CD4-positive, alpha-beta T cell (primary cell): ENCODE measurements at regions of chr18 and their contacts with region 1.

Region 1: GRCh38 chr18:67199993-67200617 is 316.4 kb downstream of the DSEL start:
- DNase-seq: peak in 3 of 14 experiments; percentile 40 to 58 (median 50)
- ATAC-seq: peak; percentile 62
- H3K4me3 ChIP-seq: no peak overlapping the region
- H3K4me3 Mint-ChIP-seq: no peak overlapping the region
- H3K27ac ChIP-seq: no peak overlapping the region
- H3K27ac Mint-ChIP-seq: no peak overlapping the region
- H3K4me1 ChIP-seq: no peaks in the 10 kb centered on the region
- H3K4me1 Mint-ChIP-seq: no peaks in the 10 kb centered on the region
- H3K27me3 ChIP-seq: no peaks in the 10 kb centered on the region
- H3K27me3 Mint-ChIP-seq: peaks cover 13% of the 10 kb centered on the region
- CTCF ChIP-seq: peak; percentile 72

Region 2: GRCh38 chr18:66473882-66474281 is 726.2 kb before region 1 on chr18:
- CTCF ChIA-PET with region 1: no interaction called
- POLR2A ChIA-PET with region 1: no interaction called
- intact Hi-C with region 1: no loop called
- DNase-seq: no peak
- ATAC-seq: no peak
- H3K4me3 ChIP-seq: no peak overlapping the region
- H3K4me3 Mint-ChIP-seq: no peak overlapping the region
- H3K27ac ChIP-seq: no peak overlapping the region
- H3K27ac Mint-ChIP-seq: no peak overlapping the region
- H3K4me1 ChIP-seq: no peaks in the 10 kb centered on the region
- H3K4me1 Mint-ChIP-seq: no peaks in the 10 kb centered on the region
- H3K27me3 ChIP-seq: no peaks in the 10 kb centered on the region
- H3K27me3 Mint-ChIP-seq: no peaks in the 10 kb centered on the region
- CTCF ChIP-seq: no peak

Region 3: GRCh38 chr18:67104700-67105284 is 95.3 kb before region 1 on chr18:
- CTCF ChIA-PET with region 1: no interaction called
- POLR2A ChIA-PET with region 1: no interaction called
- intact Hi-C with region 1: loop called in 1 of 2 experiments (anchors 1 kb)
- DNase-seq: peak in 8 of 14 experiments; percentile 1 to 48 (median 16)
- ATAC-seq: peak; percentile 39
- H3K4me3 ChIP-seq: no peak overlapping the region
- H3K4me3 Mint-ChIP-seq: no peak overlapping the region
- H3K27ac ChIP-seq: no peak overlapping the region
- H3K27ac Mint-ChIP-seq: no peak overlapping the region
- H3K4me1 ChIP-seq: no peaks in the 10 kb centered on the region
- H3K4me1 Mint-ChIP-seq: no peaks in the 10 kb centered on the region
- H3K27me3 ChIP-seq: no peaks in the 10 kb centered on the region
- H3K27me3 Mint-ChIP-seq: no peaks in the 10 kb centered on the region
- CTCF ChIP-seq: peak; percentile 34

Region 4: GRCh38 chr18:67154979-67155378 is 45.1 kb before region 1 on chr18:
- CTCF ChIA-PET with region 1: no interaction called
- POLR2A ChIA-PET with region 1: no interaction called
- intact Hi-C with region 1: no loop called
- DNase-seq: no peak
- ATAC-seq: no peak
- H3K4me3 ChIP-seq: no peak overlapping the region
- H3K4me3 Mint-ChIP-seq: no peak overlapping the region
- H3K27ac ChIP-seq: no peak overlapping the region
- H3K27ac Mint-ChIP-seq: no peak overlapping the region
- H3K4me1 ChIP-seq: no peaks in the 10 kb centered on the region
- H3K4me1 Mint-ChIP-seq: no peaks in the 10 kb centered on the region
- H3K27me3 ChIP-seq: no peaks in the 10 kb centered on the region
- H3K27me3 Mint-ChIP-seq: no peaks in the 10 kb centered on the region
- CTCF ChIP-seq: no peak